ENCODE measurements at regions of chr7 and their contacts with region 1.

Region 1: GRCh38 chr7:142496545-142497041 is 238.7 kb upstream of the PRSS58 start:
- DNase-seq: peak; percentile 84 to 98
- H3K4me3 ChIP-seq: peak overlapping the region; percentile 22; the same call in 1 of the 2 replicates
- H3K27ac ChIP-seq: peak overlapping the region; percentile 74
- H3K4me1 ChIP-seq: peaks cover 51% of the 10 kb centered on the region
- H3K27me3 ChIP-seq: no peaks in the 10 kb centered on the region
- CTCF ChIP-seq: peak; percentile 95

Region 2: GRCh38 chr7:142280263-142280662 is 216.3 kb before region 1 on chr7:
- CTCF ChIA-PET with region 1: no interaction called
- POLR2A ChIA-PET with region 1: no interaction called
- intact Hi-C with region 1: no loop called
- DNase-seq: peak in 1 of 2 experiments; percentile 58
- H3K4me3 ChIP-seq: no peak overlapping the region
- H3K27ac ChIP-seq: no peak overlapping the region
- H3K4me1 ChIP-seq: peaks cover 8% of the 10 kb centered on the region; the same call in 1 of the 2 replicates
- H3K27me3 ChIP-seq: 0 out of 2 replicates have a peak, but pooled peaks cover 3% of the 10 kb centered on the region
- CTCF ChIP-seq: no peak

Region 3: DNA sequence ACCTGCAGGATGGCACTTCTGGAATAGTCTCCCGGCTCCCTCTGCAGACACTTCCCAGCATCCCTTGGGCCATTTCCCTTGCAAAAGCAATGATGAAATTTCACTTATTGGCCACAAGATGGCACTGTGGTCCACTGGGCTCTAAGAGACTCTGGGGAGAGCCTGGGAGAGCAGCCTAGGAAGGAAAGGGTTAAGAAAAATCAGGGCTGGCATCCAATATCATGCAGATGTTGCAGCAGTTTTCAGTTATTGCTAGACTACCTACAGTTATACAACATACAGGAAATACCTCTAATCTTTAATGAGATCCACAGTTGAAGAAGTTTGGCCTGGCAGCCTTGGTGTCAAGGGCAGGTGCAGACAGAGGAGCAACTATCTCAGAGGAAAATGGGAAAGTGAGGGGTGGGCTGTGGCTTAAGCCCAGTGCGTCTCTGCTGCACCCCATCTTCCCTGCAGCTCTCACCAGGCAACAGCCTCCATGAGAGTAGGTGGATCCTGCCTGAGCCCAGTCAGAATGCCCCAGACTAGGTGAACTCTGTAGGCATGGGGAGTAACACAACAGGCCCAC is 138.6 kb before region 1 on chr7:
- CTCF ChIA-PET with region 1: no interaction called
- POLR2A ChIA-PET with region 1: interaction called, 4 read pairs
- intact Hi-C with region 1: loop called (anchors 1 kb)
- DNase-seq: peak; percentile 71 to 75
- H3K4me3 ChIP-seq: peak overlapping the region; percentile 27; the same call in 1 of the 2 replicates
- H3K27ac ChIP-seq: peak overlapping the region; percentile 0; the same call in 1 of the 2 replicates
- H3K4me1 ChIP-seq: peaks cover 28% of the 10 kb centered on the region
- H3K27me3 ChIP-seq: no peaks in the 10 kb centered on the region
- CTCF ChIP-seq: peak; percentile 98

Region 4: GRCh38 chr7:142400042-142400533 is 96.5 kb before region 1 on chr7:
- CTCF ChIA-PET with region 1: no interaction called
- POLR2A ChIA-PET with region 1: no interaction called
- intact Hi-C with region 1: no loop called
- DNase-seq: no peak
- H3K4me3 ChIP-seq: no peak overlapping the region
- H3K27ac ChIP-seq: no peak overlapping the region
- H3K4me1 ChIP-seq: no peaks in the 10 kb centered on the region
- H3K27me3 ChIP-seq: no peaks in the 10 kb centered on the region
- CTCF ChIP-seq: no peak

Region 5: GRCh38 chr7:142459551-142459963 is 37.0 kb before region 1 on chr7:
- CTCF ChIA-PET with region 1: interaction called, 3 read pairs
- POLR2A ChIA-PET with region 1: no interaction called
- intact Hi-C with region 1: loop called (anchors 1 kb)
- DNase-seq: peak; percentile 82 to 96
- H3K4me3 ChIP-seq: no peak overlapping the region
- H3K27ac ChIP-seq: peak overlapping the region; percentile 45
- H3K4me1 ChIP-seq: peaks cover 26% of the 10 kb centered on the region
- H3K27me3 ChIP-seq: no peaks in the 10 kb centered on the region
- CTCF ChIP-seq: peak; percentile 91

Region 6: GRCh38 chr7:142557971-142558582 is 61.5 kb after region 1 on chr7:
- CTCF ChIA-PET with region 1: no interaction called
- POLR2A ChIA-PET with region 1: no interaction called
- intact Hi-C with region 1: loop called (anchors 1 kb)
- DNase-seq: peak in 1 of 2 experiments; percentile 14
- H3K4me3 ChIP-seq: no peak overlapping the region
- H3K27ac ChIP-seq: peak overlapping the region; percentile 78
- H3K4me1 ChIP-seq: peaks cover 55% of the 10 kb centered on the region
- H3K27me3 ChIP-seq: no peaks in the 10 kb centered on the region
- CTCF ChIP-seq: peak; percentile 74

Region 7: DNA sequence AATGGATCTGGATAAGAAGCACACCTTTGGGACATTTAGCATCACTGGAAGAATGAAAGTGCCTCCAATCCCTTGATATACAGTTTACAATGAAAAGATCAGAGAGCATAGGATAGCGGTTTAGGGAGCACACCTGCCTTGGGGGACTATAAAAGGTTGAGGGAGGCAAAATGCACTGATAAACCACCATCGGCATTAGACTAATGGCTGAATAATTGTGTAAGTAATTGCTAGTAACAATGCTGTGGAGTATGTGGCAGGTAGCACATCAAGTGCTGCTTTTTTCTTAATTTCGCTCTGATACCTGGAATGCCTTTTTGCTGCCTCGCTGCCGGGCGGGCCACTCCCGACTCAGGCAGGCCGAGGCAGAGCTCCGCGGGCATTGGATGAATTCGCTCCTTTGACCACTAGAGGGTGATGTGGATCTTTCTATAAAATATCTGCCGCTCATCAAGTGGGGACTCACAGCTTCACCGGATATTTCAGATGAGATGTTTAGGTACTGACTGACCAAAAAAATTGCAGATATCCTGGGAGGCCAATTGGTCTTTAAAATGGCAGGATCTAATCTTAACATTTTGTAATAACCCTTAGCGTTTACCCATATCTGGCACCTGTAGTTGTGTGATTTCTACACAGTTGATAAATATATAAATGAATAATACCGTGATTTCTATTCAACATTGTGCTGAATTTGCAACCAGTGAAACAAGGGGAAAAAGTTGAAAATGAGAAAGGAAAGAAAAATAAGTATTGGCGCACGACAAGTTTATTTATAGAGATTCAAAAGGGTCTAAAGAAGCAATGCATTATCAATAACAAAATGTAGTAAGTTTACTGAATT is 135.9 kb after region 1 on chr7:
- CTCF ChIA-PET with region 1: no interaction called
- POLR2A ChIA-PET with region 1: no interaction called
- intact Hi-C with region 1: loop called (anchors 1 kb)
- DNase-seq: peak; percentile 70 to 72
- H3K4me3 ChIP-seq: no peak overlapping the region
- H3K27ac ChIP-seq: no peak overlapping the region
- H3K4me1 ChIP-seq: no peaks in the 10 kb centered on the region
- H3K27me3 ChIP-seq: no peaks in the 10 kb centered on the region
- CTCF ChIP-seq: peak; percentile 93

Region 8: GRCh38 chr7:143002106-143002505 is 505.5 kb after region 1 on chr7:
- CTCF ChIA-PET with region 1: interaction called, 3 read pairs
- POLR2A ChIA-PET with region 1: no interaction called
- intact Hi-C with region 1: loop called (anchors 1 kb)
- DNase-seq: peak in 1 of 2 experiments; percentile 12
- H3K4me3 ChIP-seq: no peak overlapping the region
- H3K27ac ChIP-seq: no peak overlapping the region
- H3K4me1 ChIP-seq: peaks cover 4% of the 10 kb centered on the region; the same call in 1 of the 2 replicates
- H3K27me3 ChIP-seq: no peaks in the 10 kb centered on the region
- CTCF ChIP-seq: peak; percentile 73

Measured in PC-9 (cell line).